Left lung (tissue), 14 donors: ENCODE measurements at regions of chr16 and their contacts with region 1.

Region 1: GRCh38 chr16:75234856-75235696 is 16.3 kb downstream of the CTRB1 start:
- DNase-seq: peak in 1 of 4 donors; percentile 83
- ATAC-seq: no peak
- H3K4me3 ChIP-seq: no peak overlapping the region
- H3K27ac ChIP-seq: peak overlapping the region in 1 of 2 donors; percentile 7
- H3K4me1 ChIP-seq: peaks cover 14 to 30% of the 10 kb centered on the region in 2 donors
- H3K27me3 ChIP-seq: peaks cover 0 to 8% of the 10 kb centered on the region in 2 donors
- CTCF ChIP-seq: no peak

Region 2: GRCh38 chr16:75385507-75386152 is 150.6 kb after region 1 on chr16:
- intact Hi-C with region 1: loop called in 1 of 2 experiments (anchors 5 kb)
- DNase-seq: peak in 2 of 4 donors; percentile 77 to 87
- ATAC-seq: peak; percentile 85
- H3K4me3 ChIP-seq: no peak overlapping the region
- H3K27ac ChIP-seq: no peak overlapping the region
- H3K4me1 ChIP-seq: peaks cover 6 to 19% of the 10 kb centered on the region in 2 donors
- H3K27me3 ChIP-seq: no peaks in the 10 kb centered on the region
- CTCF ChIP-seq: peak; percentile 64 to 69